Activated T-helper 1 cell treated with anti-CD3 and anti-CD28 coated beads, Interleukin-12 subunit alpha, Interleukin-12 subunit beta, Interleukin-2, Interleukin-4 antibody, amounts not matched to agents 30 ng/mL and 10 ng/mL and 1 ng/mL, durations not matched to agents 14 hours and 24 hours and 36 hours (primary cell): ENCODE measurements at regions of chr10 and their contacts with region 1.

Region 1: DNA sequence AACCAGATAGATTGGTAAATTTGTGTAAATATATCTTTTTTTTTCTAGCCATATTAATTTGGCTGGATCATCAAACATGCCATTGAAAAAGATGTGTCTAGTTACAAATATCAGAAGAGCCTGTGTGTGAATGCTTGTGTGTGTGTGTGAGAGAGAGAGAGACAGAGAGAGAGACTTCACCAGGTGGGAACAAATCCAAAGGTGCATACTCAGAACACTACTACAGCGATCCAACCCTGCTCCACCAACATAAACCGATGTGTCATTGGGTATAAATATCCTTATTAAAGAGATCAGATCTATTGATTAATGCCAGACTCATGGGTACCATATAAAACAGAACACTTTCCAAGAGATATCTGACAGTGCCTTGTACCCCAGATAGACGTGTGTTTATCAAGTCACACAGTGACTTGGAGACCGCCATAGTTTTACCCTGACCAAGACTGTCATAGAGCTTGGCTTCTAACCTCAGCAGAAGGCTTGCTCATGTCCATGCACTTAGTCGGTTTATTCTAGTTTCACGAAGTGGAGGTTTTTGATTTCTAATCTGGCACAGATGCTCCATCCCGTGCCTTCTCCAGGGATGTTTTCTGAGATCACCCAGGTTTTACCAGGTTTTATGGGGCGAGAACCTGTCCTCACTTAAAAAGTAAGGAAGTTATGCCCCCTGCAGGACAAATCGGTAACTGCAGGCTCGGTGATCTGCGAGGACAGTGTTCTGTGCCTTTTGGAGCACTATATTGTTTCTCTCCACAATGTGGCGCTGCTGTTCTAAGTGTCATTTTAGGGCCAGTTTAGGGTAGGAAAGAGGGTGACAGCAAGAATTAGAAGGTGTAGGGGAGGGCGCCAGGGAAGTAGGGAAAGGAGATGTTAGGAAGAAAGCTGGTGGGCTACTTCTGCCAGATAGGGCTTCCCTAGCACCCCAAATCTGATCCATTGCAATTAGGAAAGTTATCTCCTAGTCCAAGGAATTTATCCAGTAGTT is 29.3 kb upstream of the WNT8B start:
- DNase-seq: peak; percentile 89
- H3K4me3 Mint-ChIP-seq: no peak overlapping the region
- H3K27ac Mint-ChIP-seq: no peak overlapping the region
- H3K4me1 Mint-ChIP-seq: peaks cover 17% of the 10 kb centered on the region
- H3K27me3 Mint-ChIP-seq: no peaks in the 10 kb centered on the region

Region 2: DNA sequence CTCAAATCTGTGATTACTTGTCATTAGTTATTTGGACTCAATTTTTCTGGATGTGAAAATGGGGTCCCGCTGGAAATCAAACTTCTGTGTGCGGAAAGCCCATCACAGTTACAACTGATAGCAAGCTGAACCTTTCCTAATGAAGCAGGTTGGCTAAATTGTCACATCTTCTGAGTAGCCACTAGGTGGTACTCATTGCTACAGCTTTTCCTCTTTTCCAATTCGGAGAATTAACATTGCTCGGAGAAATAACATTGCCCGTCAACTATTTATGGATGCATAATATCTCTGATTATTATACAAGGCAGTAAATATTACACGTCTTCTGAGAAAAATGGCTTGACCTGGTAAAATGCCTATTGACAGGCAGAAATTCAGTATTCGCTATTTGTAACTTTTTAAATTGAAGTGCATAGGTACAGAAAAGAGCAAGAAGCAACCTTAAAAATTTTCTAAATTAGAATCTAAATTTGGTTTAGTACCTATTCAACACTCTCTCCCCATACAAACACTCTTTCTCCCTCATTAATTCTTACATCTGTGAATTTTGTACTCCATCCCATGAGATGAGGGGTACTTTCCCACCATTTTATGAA is 129.7 kb before region 1 on chr10:
- intact Hi-C with region 1: loop called (anchors 1 kb)
- DNase-seq: no peak
- H3K4me3 Mint-ChIP-seq: no peak overlapping the region
- H3K27ac Mint-ChIP-seq: no peak overlapping the region
- H3K4me1 Mint-ChIP-seq: no peaks in the 10 kb centered on the region
- H3K27me3 Mint-ChIP-seq: peaks cover 40% of the 10 kb centered on the region

Region 3: DNA sequence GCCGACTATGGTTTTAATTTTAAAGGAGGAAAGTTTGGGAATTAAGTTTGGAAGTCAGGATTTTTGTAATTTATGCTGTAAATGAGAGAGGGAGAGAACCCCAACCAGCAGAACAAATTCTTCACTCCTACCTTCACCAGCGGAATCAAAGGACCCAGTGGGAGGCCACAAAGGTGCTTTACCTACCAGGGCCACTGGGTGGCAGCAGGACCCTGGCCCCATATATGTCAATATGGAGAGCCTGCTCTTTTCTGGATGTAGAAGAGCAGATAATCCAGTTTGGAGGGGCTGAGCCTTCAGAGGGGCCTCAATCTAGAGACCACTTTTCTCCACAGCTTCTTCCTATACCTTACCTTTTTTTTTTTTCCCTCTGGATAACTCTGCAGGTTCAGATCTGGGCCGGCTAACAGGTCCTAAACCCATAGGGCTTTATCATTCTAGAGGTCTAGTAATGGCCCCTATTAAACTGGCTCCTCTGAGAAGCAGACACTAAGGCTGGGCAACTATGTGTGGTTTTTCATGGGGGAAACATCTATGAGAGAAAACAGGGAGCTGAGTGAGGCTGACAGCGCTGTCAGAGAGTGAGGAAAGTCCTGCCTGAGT is 95.0 kb before region 1 on chr10:
- intact Hi-C with region 1: loop called (anchors 1 kb)
- DNase-seq: peak; percentile 67
- H3K4me3 Mint-ChIP-seq: no peak overlapping the region
- H3K27ac Mint-ChIP-seq: no peak overlapping the region
- H3K4me1 Mint-ChIP-seq: peaks cover 35% of the 10 kb centered on the region
- H3K27me3 Mint-ChIP-seq: peaks cover 17% of the 10 kb centered on the region

Region 4: GRCh38 chr10:100481462-100482081 is 48.0 kb after region 1 on chr10:
- intact Hi-C with region 1: loop called (anchors 1 kb)
- DNase-seq: peak; percentile 85
- H3K4me3 Mint-ChIP-seq: peak overlapping the region; percentile 79
- H3K27ac Mint-ChIP-seq: peak overlapping the region; percentile 42
- H3K4me1 Mint-ChIP-seq: peaks cover 41% of the 10 kb centered on the region
- H3K27me3 Mint-ChIP-seq: no peaks in the 10 kb centered on the region

Region 5: DNA sequence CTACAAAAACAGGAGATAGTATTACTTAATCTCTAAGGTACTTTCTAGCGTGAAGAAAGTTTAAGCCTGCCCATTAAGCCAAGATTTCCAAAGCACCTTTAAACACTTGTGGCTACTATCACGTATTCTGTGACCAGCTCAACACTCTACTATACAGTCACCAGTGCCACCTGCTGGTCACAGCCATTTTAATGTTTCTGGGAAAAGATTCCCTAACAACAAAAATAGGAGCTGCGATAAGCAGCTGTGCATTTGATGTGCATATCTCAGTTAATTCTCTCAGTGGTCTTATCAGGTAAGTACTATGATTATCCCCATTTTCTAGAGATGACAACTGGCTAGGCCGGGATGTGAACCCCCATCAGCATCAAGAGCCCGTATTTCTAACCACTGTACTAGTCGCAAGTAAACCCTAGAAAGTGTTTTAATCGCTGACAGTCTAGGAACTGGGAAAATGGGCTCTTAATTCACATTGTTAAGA is 85.3 kb after region 1 on chr10:
- intact Hi-C with region 1: loop called (anchors 1 kb)
- DNase-seq: peak; percentile 49
- H3K4me3 Mint-ChIP-seq: no peak overlapping the region
- H3K27ac Mint-ChIP-seq: no peak overlapping the region
- H3K4me1 Mint-ChIP-seq: peaks cover 28% of the 10 kb centered on the region
- H3K27me3 Mint-ChIP-seq: no peaks in the 10 kb centered on the region